Activated CD4-positive, alpha-beta T cell treated with anti-CD3 and anti-CD28 coated beads for 36 hours (primary cell): ENCODE measurements at regions of chr1 and their contacts with region 1.

Region 1: DNA sequence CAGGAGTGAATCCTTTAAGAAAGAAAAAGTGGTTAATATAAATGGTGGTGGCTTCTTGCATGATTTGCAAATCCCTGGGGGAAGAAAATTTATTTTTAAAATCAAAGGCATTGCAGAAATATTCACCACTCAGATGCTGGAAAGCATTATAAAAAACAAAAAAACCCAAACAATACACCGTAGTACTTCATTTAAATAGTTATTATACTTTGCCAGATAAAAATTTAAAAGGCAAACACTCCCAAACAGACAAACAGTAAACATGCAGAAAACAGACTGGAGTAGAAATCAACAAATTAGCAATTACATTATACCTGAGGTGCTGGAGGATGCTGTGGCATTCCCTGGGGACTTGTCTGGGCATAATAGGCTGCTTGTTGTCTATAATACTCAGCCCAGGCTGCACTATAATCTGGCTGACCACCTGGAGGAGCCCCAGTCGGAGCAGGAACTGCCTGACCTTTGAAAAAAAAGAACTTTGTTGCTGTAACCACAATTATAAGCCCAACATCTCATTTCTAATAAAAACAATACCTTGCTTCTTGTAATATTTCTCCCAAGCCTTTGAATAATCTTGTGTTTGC is 29.9 kb downstream of the FUBP1 start:
- DNase-seq: no peak
- ATAC-seq: no peak
- H3K4me3 Mint-ChIP-seq: no peak overlapping the region
- H3K27ac Mint-ChIP-seq: peak overlapping the region; percentile 74
- H3K4me1 Mint-ChIP-seq: peaks cover 36% of the 10 kb centered on the region
- H3K27me3 Mint-ChIP-seq: no peaks in the 10 kb centered on the region

Region 2: DNA sequence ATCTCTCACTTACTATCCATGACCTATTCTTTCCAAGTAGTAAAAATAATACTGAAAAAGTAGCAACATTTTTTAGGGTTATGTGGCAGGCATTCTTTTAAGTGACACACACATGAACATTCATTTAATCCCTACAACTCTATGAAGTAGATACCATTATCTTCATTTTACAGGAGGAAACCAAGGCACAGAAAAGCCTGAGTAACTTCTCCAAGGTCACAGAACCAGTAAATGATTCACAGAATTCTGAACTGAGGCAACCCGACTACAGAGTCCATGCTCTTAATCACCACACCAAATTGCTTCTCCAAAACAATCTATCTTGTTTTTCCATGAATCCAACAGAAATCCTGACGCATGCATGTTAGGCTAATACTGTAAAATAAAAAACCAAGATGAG is 12.5 kb after region 1 on chr1:
- CTCF ChIA-PET with region 1: interaction called, 11 read pairs
- POLR2A ChIA-PET with region 1: interaction called, 3 read pairs
- intact Hi-C with region 1: loop called in 1 of 2 experiments (anchors 2 kb)
- DNase-seq: no peak
- ATAC-seq: peak; percentile 76
- H3K4me3 Mint-ChIP-seq: no peak overlapping the region
- H3K27ac Mint-ChIP-seq: peak overlapping the region; percentile 67
- H3K4me1 Mint-ChIP-seq: peaks cover 47% of the 10 kb centered on the region
- H3K27me3 Mint-ChIP-seq: no peaks in the 10 kb centered on the region

Region 3: GRCh38 chr1:77970192-77970591 is 21.3 kb after region 1 on chr1:
- CTCF ChIA-PET with region 1: interaction called, 5 read pairs
- POLR2A ChIA-PET with region 1: interaction called, 3 read pairs
- intact Hi-C with region 1: loop called in 1 of 2 experiments (anchors 2 kb)
- DNase-seq: no peak
- ATAC-seq: no peak
- H3K4me3 Mint-ChIP-seq: no peak overlapping the region
- H3K27ac Mint-ChIP-seq: no peak overlapping the region
- H3K4me1 Mint-ChIP-seq: peaks cover 63% of the 10 kb centered on the region
- H3K27me3 Mint-ChIP-seq: no peaks in the 10 kb centered on the region